OCI-LY7 (cell line): ENCODE measurements at regions of chr13 and their contacts with region 1.

Region 1: DNA sequence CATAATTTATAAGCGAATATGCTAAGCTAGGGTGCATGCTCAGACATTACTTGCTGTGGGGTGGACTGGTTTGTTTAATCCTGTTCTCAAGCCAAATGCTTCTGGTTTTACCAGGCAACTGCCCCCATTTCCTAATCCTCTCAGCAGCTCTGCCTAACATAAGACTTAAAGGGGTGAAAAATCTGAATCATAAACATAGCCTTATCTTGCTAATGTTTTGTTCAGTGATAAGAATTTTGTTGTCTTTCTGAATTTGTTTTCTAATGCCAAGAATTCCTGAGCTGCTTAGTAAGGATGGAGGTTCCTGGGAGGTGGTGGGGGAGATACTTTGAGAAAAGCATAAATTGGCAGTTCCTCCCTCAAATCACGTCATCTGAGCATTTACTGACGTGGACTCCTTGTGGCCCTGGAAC is 42.7 kb downstream of the ING1 start:
- DNase-seq: no peak
- H3K4me3 ChIP-seq: no peak overlapping the region
- H3K27ac ChIP-seq: no peak overlapping the region
- H3K4me1 ChIP-seq: no peaks in the 10 kb centered on the region
- CTCF ChIP-seq: no peak

Region 2: GRCh38 chr13:110561344-110562035 is 194.7 kb before region 1 on chr13 and contains the start of gene RAB20:
- CTCF ChIA-PET with region 1: no interaction called
- POLR2A ChIA-PET with region 1: no interaction called
- intact Hi-C with region 1: no loop called
- DNase-seq: peak; percentile 37
- H3K4me3 ChIP-seq: peak within 1 kb of the TSS; percentile 71
- H3K27ac ChIP-seq: no peak within 1 kb of the TSS
- H3K4me1 ChIP-seq: no peaks in the 10 kb centered on the region
- CTCF ChIP-seq: no peak
- total RNA-seq, gene RAB20: not detected in 2 replicates

Region 3: GRCh38 chr13:110907951-110908898 is 152.0 kb after region 1 on chr13:
- CTCF ChIA-PET with region 1: interaction called, 12 read pairs
- POLR2A ChIA-PET with region 1: no interaction called
- intact Hi-C with region 1: no loop called
- DNase-seq: no peak
- H3K4me3 ChIP-seq: no peak overlapping the region
- H3K27ac ChIP-seq: no peak overlapping the region
- H3K4me1 ChIP-seq: peaks cover 11% of the 10 kb centered on the region
- CTCF ChIP-seq: no peak